ENCODE measurements at regions of chr2 and their contacts with region 1.

Region 1: GRCh38 chr2:208359632-208359986 is 47.0 kb upstream of the PTH2R start:
- DNase-seq: no peak
- ATAC-seq: no peak
- H3K4me3 ChIP-seq: no peak overlapping the region
- H3K27ac ChIP-seq: no peak overlapping the region
- H3K4me1 ChIP-seq: no peaks in the 10 kb centered on the region
- H3K27me3 ChIP-seq: no peaks in the 10 kb centered on the region; the same call in 1 of the 2 replicates
- CTCF ChIP-seq: no peak
- POLR2A ChIP-seq: no peak
- RAD21 ChIP-seq: no peak

Region 2: DNA sequence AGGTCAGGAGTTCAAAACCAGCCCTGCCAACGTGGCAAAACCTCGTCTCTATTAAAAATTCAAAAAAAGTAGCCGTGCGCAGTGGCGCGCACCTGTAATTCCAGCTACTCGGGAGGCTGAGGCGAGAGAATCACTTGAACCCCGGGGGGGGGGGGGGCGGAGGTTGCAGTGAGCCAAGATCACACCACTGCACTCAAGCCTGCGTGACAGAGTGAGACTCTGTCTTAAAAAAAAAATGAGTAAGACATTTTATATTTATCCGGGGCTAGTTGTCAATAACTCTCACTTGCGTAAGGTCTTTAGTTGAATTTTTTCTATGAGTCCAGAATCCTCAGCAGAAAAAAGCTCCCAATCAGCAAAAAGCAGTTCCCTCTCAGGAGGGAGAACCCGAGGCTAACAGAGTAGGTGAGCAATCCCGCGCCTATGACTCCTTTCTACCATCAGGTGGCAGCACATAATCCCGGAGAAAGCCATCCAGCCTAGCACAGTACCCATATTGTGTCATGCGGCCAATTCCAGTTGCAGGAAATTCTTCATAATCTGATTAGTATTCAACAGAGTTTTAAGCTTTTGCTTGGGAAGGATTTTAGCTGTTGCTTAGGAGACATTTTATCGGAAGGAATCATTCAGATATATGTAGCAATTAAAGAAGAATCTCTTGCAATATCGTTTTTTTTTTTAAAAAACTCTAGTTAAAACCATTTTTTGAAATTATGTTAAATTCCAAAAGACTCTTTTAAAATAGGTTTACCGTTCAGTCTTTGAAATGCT is 184.4 kb before region 1 on chr2:
- CTCF ChIA-PET with region 1: no interaction called
- POLR2A ChIA-PET with region 1: no interaction called
- dilution Hi-C with region 1: no loop called
- in situ Hi-C with region 1: no loop called
- intact Hi-C with region 1: loop called (anchors 10 kb)
- DNase-seq: peak; percentile 71
- ATAC-seq: peak; percentile 100
- H3K4me3 ChIP-seq: no peak overlapping the region
- H3K27ac ChIP-seq: no peak overlapping the region
- H3K4me1 ChIP-seq: no peaks in the 10 kb centered on the region
- H3K27me3 ChIP-seq: no peaks in the 10 kb centered on the region; the same call in 1 of the 2 replicates
- CTCF ChIP-seq: peak; percentile 81
- POLR2A ChIP-seq: no peak
- RAD21 ChIP-seq: peak; percentile 71

Region 3: GRCh38 chr2:208392300-208393080 is 32.9 kb after region 1 on chr2:
- CTCF ChIA-PET with region 1: no interaction called
- POLR2A ChIA-PET with region 1: no interaction called
- dilution Hi-C with region 1: no loop called
- in situ Hi-C with region 1: no loop called
- intact Hi-C with region 1: no loop called
- DNase-seq: no peak
- ATAC-seq: no peak
- H3K4me3 ChIP-seq: no peak overlapping the region
- H3K27ac ChIP-seq: no peak overlapping the region
- H3K4me1 ChIP-seq: no peaks in the 10 kb centered on the region
- H3K27me3 ChIP-seq: no peaks in the 10 kb centered on the region
- CTCF ChIP-seq: peak; percentile 22
- POLR2A ChIP-seq: no peak
- RAD21 ChIP-seq: no peak

Measured in IMR-90 (cell line).